GM12878 (cell line): ENCODE measurements at regions of chr3 and their contacts with region 1.

Region 1: GRCh38 chr3:146065573-146066006 is 95.4 kb downstream of the PLOD2 start:
- DNase-seq: no peak
- ATAC-seq: no peak
- H3K4me3 ChIP-seq: no peak overlapping the region
- H3K27ac ChIP-seq: no peak overlapping the region
- H3K4me1 ChIP-seq: no peaks in the 10 kb centered on the region
- H3K27me3 ChIP-seq: no peaks in the 10 kb centered on the region
- CTCF ChIP-seq: peak; percentile 44 to 56 (median 50)
- EP300 ChIP-seq: no peak
- POLR2A ChIP-seq: no peak
- RAD21 ChIP-seq: peak; percentile 62

Region 2: DNA sequence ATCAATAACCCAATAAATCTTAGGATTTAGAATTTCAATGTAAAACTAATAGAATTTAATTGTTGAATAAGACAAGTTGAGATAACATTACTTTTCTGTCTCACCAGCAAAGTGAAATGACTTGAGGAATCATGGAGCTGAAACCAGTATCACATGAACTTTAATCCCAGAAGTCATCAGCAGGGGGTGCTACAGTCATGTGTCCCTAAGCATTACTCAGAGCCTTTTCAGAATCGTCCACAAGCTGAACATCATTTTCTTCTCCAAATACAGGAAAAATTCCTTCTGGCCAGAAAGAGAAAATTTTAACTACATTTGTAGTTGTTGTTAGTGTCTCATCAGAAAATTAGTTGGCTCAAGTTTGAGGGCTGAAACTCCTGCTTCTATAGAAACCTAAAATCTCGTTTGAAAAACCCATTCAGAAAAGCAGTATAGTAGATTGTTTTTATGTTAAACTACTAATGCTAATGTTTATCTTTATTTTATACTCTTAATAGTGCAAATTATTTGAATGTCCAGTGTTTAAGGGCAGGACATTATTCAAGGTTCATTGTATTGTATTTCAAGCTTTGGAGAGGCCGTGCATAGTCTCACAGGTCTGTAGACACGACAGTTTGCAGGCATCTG is 288.7 kb before region 1 on chr3:
- CTCF ChIA-PET with region 1: interaction called, 28 read pairs
- POLR2A ChIA-PET with region 1: no interaction called
- RAD21 ChIA-PET with region 1: interaction called, 14 read pairs
- SMC1A ChIA-PET with region 1: interaction called, 11 read pairs
- in situ Hi-C with region 1: no loop called
- intact Hi-C with region 1: loop called (anchors 5 kb)
- DNase-seq: peak; percentile 16
- ATAC-seq: peak; percentile 90
- H3K4me3 ChIP-seq: no peak overlapping the region
- H3K27ac ChIP-seq: no peak overlapping the region
- H3K4me1 ChIP-seq: no peaks in the 10 kb centered on the region
- H3K27me3 ChIP-seq: no peaks in the 10 kb centered on the region
- CTCF ChIP-seq: peak; percentile 57 to 75 (median 60); a peak in 5 of 6 replicates
- EP300 ChIP-seq: no peak
- POLR2A ChIP-seq: no peak
- RAD21 ChIP-seq: peak; percentile 59

Region 3: DNA sequence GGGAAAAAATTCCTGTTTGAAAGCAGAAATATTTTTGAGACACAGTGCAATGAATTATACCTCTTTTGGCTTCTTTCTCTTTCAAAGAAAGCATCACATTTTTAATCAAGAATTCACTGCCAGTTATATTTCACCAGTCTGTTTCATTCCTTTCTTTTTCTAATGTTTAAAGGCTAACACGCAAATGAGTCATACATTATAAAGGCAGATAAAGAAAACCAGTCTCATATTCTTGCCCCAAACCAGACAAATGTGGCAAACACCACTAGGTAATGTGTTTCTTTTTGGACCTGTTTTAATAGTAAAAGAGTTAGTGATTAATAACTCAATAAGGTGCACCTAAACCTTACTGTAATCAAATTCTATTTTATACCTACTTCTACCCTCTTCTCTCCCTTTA is 11.6 kb after region 1 on chr3:
- CTCF ChIA-PET with region 1: interaction called, 16 read pairs
- POLR2A ChIA-PET with region 1: no interaction called
- RAD21 ChIA-PET with region 1: interaction called, 5 read pairs
- SMC1A ChIA-PET with region 1: interaction called, 5 read pairs
- in situ Hi-C with region 1: no loop called
- intact Hi-C with region 1: no loop called
- DNase-seq: no peak
- ATAC-seq: no peak
- H3K4me3 ChIP-seq: no peak overlapping the region
- H3K27ac ChIP-seq: no peak overlapping the region
- H3K4me1 ChIP-seq: no peaks in the 10 kb centered on the region
- H3K27me3 ChIP-seq: no peaks in the 10 kb centered on the region
- CTCF ChIP-seq: no peak
- EP300 ChIP-seq: no peak
- POLR2A ChIP-seq: no peak
- RAD21 ChIP-seq: no peak

Region 4: DNA sequence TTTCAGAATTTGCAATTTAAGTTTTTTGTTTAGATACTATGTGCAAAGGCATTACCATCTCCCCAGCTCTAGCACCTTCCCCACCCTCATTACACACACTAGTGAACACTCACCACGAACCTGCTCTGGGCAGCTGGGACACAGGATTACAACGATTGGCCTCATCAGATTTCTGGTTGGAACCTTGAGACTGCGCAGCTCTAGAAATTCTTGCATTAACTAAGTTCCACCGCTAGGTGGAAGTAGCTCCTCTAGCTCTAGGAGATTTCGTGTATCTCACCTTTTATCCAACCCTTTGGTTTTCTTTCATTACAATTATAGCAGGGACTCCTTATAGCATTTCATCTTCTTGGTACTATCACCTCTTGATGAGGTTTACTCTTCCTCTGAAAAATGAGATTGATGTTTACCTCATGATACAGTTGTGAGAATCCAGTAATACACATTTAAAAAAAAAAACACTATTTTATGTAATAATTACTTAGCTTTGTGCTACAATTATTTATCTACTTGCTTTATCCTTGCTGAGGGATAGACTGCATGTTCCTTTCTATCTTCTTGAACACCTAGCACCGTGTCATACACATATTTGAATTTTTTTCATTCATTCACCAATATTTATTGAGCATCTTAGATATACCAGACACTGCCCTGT is 124.1 kb after region 1 on chr3:
- CTCF ChIA-PET with region 1: interaction called, 63 read pairs
- POLR2A ChIA-PET with region 1: no interaction called
- RAD21 ChIA-PET with region 1: interaction called, 47 read pairs
- SMC1A ChIA-PET with region 1: interaction called, 34 read pairs
- in situ Hi-C with region 1: no loop called
- intact Hi-C with region 1: loop called (anchors 5 kb)
- DNase-seq: no peak
- ATAC-seq: peak; percentile 95
- H3K4me3 ChIP-seq: no peak overlapping the region
- H3K27ac ChIP-seq: no peak overlapping the region
- H3K4me1 ChIP-seq: no peaks in the 10 kb centered on the region
- H3K27me3 ChIP-seq: no peaks in the 10 kb centered on the region
- CTCF ChIP-seq: peak; percentile 67 to 73 (median 72)
- EP300 ChIP-seq: no peak
- POLR2A ChIP-seq: no peak
- RAD21 ChIP-seq: peak; percentile 69

Region 5: DNA sequence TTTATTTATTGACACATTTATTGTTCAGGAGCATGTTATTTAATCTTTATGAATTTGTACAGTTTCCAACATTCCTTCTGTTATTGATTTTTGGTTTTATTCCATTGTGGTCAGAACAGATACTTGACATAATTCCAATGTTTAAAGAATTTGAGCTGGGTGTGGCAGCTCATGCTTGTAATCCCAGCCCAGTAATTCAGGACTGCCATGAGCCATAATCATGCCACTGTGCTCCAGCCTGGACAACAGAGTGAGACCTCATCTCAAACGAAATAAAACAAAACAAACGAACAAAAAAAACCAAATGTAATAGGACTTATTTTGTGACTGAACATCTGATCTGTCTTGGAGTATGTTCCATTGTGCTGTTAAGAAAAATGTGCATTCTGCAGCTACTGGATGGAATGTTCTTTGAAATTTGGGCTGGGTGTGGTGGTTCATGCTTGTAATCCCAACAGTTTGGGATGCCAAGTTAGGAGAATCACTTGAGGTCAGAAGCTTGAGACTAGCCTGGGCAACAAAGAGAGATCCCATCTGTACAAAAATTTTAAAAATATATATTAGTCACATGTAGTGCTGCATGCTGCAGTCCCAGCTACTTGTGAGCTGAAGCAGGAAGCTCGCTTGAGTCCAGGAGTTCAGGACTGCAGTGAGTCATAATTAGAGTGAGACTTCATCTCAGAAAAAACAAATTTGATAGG is 248.0 kb after region 1 on chr3:
- CTCF ChIA-PET with region 1: no interaction called
- POLR2A ChIA-PET with region 1: no interaction called
- RAD21 ChIA-PET with region 1: no interaction called
- SMC1A ChIA-PET with region 1: no interaction called
- in situ Hi-C with region 1: no loop called
- intact Hi-C with region 1: no loop called
- DNase-seq: no peak
- ATAC-seq: no peak
- H3K4me3 ChIP-seq: no peak overlapping the region
- H3K27ac ChIP-seq: no peak overlapping the region
- H3K4me1 ChIP-seq: no peaks in the 10 kb centered on the region
- H3K27me3 ChIP-seq: no peaks in the 10 kb centered on the region
- CTCF ChIP-seq: no peak
- EP300 ChIP-seq: no peak
- POLR2A ChIP-seq: no peak
- RAD21 ChIP-seq: no peak

Region 6: DNA sequence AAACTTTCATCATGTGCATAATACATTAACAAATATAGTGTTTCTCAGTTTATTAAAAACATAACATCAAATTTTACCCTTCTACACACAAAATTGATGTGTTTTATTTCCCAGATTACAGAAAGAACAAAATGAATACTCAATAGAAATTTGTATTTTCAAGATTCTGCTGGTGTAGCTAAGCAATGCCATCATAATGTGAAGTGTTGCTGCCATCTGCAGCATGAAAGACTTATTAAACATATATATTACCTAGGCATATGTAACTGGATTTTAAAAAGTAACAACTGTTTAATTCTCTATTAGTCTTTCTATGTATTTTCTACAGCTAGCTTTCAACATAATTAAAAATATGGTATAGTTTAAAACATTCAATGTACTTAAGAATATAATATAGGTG is 512.1 kb after region 1 on chr3:
- CTCF ChIA-PET with region 1: interaction called, 11 read pairs
- POLR2A ChIA-PET with region 1: no interaction called
- RAD21 ChIA-PET with region 1: interaction called, 17 read pairs
- SMC1A ChIA-PET with region 1: interaction called, 6 read pairs
- in situ Hi-C with region 1: loop called (anchors 25 kb)
- intact Hi-C with region 1: loop called (anchors 5 kb)
- DNase-seq: no peak
- ATAC-seq: peak; percentile 70
- H3K4me3 ChIP-seq: no peak overlapping the region
- H3K27ac ChIP-seq: no peak overlapping the region
- H3K4me1 ChIP-seq: no peaks in the 10 kb centered on the region
- H3K27me3 ChIP-seq: no peaks in the 10 kb centered on the region
- CTCF ChIP-seq: peak; percentile 9 to 59 (median 19); a peak in 3 of 6 replicates
- EP300 ChIP-seq: no peak
- POLR2A ChIP-seq: no peak
- RAD21 ChIP-seq: peak; percentile 78

Region 7: GRCh38 chr3:146640955-146641867 is 575.6 kb after region 1 on chr3:
- CTCF ChIA-PET with region 1: no interaction called
- POLR2A ChIA-PET with region 1: no interaction called
- RAD21 ChIA-PET with region 1: interaction called, 4 read pairs
- SMC1A ChIA-PET with region 1: interaction called, 9 read pairs
- in situ Hi-C with region 1: no loop called
- intact Hi-C with region 1: loop called (anchors 10 kb)
- DNase-seq: no peak
- ATAC-seq: peak; percentile 91
- H3K4me3 ChIP-seq: no peak overlapping the region
- H3K27ac ChIP-seq: no peak overlapping the region
- H3K4me1 ChIP-seq: no peaks in the 10 kb centered on the region
- H3K27me3 ChIP-seq: no peaks in the 10 kb centered on the region
- CTCF ChIP-seq: peak; percentile 46 to 60 (median 49); a peak in 5 of 6 replicates
- EP300 ChIP-seq: no peak
- POLR2A ChIP-seq: no peak
- RAD21 ChIP-seq: peak; percentile 80